A549 (cell line): ENCODE measurements at regions of chr11 and their contacts with region 1.

Region 1: DNA sequence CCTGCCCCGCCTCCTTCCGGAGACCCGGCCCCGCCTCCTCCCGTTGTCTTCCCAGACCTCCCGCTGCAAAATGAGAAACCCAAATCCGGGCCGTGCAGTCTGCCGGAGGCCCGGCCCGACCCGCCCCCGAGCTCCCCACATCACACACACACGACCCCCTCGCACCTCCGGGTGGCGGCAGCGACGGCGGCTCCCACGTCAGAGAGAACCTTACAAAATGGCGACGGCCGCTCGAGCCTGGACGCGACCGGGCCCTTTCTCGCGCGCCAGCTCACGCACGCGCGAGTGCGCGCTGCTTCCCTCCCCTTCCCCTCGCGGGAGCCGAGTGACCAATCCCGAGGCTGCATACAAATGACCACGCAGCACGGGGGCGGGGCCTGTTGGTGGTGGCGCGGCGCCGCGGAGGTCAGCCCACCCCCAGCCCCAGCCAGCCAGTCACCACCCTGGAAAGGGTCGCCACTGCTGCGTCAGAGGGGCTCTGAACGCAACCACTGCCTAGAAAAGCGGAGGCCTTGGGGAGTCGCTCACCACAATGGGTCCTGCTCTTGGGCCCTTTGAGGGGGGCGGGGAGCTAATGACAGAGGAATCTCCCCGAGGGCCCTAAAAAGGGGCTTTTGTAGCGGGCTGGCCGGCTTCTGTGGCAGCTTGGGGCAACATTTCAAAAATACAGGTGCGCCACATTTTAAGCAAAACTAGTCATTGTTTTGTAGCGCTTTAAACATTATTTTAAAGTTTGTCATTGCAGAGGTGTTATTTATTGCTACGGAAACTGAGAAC is at the start of gene RBM4B:
- DNase-seq: peak; percentile 96 to 97
- ATAC-seq: peak; percentile 96
- H3K4me3 ChIP-seq: peak within 1 kb of the TSS; percentile 72
- H3K27ac ChIP-seq: peak within 1 kb of the TSS; percentile 94 to 98
- H3K4me1 ChIP-seq: peaks cover 26% of the 10 kb centered on the region
- CTCF ChIP-seq: no peak
- EP300 ChIP-seq: no peak
- POLR2A ChIP-seq: peak; percentile 66
- RAD21 ChIP-seq: no peak
- polyA plus RNA-seq, gene RBM4B: 30.1 and 32.7 TPM in 2 replicates

Region 2: GRCh38 chr11:66408488-66409214 is 269.1 kb before region 1 on chr11:
- CTCF ChIA-PET with region 1: interaction called, 46 read pairs
- POLR2A ChIA-PET with region 1: no interaction called
- DNase-seq: peak; percentile 87 to 91
- ATAC-seq: peak; percentile 72 to 88
- H3K4me3 ChIP-seq: peak overlapping the region; percentile 47
- H3K27ac ChIP-seq: peak overlapping the region in 1 of 2 experiments; percentile 38; a peak in 1 of 6 replicates
- H3K4me1 ChIP-seq: no peaks in the 10 kb centered on the region
- CTCF ChIP-seq: peak; percentile 100
- EP300 ChIP-seq: no peak
- POLR2A ChIP-seq: no peak
- RAD21 ChIP-seq: peak; percentile 95 to 99

Region 3: DNA sequence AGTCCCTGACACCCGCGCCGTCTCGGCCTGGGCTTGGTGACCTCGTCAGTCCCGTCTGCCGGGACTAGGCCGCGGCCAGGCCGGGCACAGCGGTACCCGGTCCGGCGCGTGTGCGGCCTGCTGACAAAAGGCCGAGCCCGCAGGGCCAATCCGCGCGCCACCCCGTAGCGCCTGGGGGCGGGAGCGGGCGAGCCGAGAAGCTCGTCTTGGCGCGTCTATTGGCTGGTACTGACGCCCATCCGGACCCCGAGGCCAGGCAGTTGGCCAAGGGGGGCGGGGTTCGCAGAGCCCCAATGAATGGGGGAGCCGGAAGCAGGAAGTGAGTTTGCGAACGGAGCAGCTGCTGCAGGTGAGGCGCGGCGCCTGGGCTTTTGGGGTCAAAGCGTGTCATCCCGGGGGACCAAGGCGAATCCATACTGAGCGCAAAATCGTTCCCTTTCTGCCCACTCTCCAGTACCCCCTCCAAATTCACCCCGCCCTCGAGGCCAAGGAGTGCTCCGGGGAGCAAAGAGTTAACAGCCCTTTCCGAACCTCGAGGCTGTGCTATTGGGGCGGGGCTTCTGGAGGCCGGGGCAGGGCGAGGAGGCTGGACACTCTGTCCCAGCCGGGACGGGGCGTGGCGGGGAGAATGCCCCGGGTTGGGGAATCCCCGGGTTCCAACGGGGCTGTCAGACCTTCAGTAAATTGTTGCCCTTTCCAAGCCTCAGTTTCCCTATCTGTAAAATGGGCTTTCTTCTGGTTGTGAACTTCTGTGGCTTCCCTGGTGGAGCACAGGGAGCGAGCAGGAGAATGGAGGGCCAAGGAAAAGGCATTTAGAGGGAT is 197.5 kb before region 1 on chr11 and contains the start of gene DPP3:
- CTCF ChIA-PET with region 1: interaction called, 6 read pairs
- POLR2A ChIA-PET with region 1: interaction called, 17 read pairs
- DNase-seq: peak; percentile 97 to 100
- ATAC-seq: peak; percentile 92 to 95
- H3K4me3 ChIP-seq: peak within 1 kb of the TSS; percentile 73
- H3K27ac ChIP-seq: peak within 1 kb of the TSS; percentile 94 to 98
- H3K4me1 ChIP-seq: peaks cover 6% of the 10 kb centered on the region; the same call in 1 of the 3 replicates
- CTCF ChIP-seq: no peak
- EP300 ChIP-seq: no peak
- POLR2A ChIP-seq: peak; percentile 80
- RAD21 ChIP-seq: no peak
- polyA plus RNA-seq, gene DPP3: 52.2 TPM in 2 replicates

Region 4: GRCh38 chr11:66592457-66593302 is 85.1 kb before region 1 on chr11 and contains the starts of genes CCDC87 and CCS:
- CTCF ChIA-PET with region 1: interaction called, 21 read pairs
- POLR2A ChIA-PET with region 1: interaction called, 4 read pairs
- DNase-seq: peak; percentile 96 to 100
- ATAC-seq: peak; percentile 98
- H3K4me3 ChIP-seq: peak within 1 kb of the TSS; percentile 68
- H3K27ac ChIP-seq: peak within 1 kb of the TSS; percentile 89 to 91
- H3K4me1 ChIP-seq: peaks cover 9% of the 10 kb centered on the region; the same call in 2 of the 3 replicates
- CTCF ChIP-seq: peak; percentile 68
- EP300 ChIP-seq: no peak
- POLR2A ChIP-seq: peak; percentile 99
- RAD21 ChIP-seq: peak in 1 of 2 experiments; percentile 45; a peak in 3 of 5 replicates
- polyA plus RNA-seq, gene CCDC87: 0.47 and 0.54 TPM in 2 replicates
- polyA plus RNA-seq, gene CCS: 17.2 and 18.3 TPM in 2 replicates

Region 5: DNA sequence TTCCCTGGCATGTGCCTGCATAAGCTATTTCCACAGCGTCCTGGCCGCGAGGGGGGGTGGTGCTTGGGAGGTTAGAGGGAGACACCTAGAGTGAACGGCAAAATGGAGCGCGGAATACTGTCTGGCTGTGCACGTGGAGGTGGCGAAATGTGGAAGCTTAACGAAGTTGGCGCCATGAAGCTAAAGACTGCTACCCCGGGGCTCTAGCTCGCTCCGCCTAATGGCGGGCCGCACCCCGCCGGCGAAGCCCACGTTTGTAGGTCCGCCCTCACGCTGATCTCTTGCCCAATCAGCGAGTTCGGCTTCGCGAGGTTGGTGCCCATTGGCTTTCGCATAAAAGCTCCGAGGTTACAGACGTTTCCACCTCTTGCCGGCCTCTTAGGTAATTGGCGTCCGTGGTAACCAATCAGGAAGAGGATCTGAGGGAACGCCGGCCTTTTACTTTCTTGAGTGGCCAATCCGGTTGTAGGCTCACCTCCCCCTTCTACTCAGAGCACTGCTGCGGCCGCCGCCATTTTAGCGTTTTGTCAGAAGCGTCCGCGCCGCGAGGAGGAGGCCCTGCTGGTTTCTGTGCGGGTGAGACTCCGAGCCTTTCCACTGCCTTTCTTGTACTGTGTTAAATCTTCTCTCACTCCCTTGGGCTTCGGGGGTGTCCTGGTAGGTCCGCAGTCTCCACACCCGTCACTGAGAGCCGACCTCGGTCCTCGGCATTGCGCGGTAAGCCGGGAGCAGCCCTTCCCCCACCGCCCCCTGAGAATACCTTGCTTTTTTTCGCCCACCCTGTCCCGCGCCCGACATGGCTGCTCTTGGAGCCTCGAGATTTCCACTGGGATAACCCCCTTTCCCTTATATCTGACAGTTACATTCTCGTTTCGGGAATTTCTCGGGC is 39.4 kb before region 1 on chr11 and contains the start of gene RBM4:
- CTCF ChIA-PET with region 1: interaction called, 6 read pairs
- POLR2A ChIA-PET with region 1: interaction called, 23 read pairs
- DNase-seq: peak; percentile 99 to 100
- ATAC-seq: peak; percentile 95
- H3K4me3 ChIP-seq: peak within 1 kb of the TSS; percentile 71
- H3K27ac ChIP-seq: peak within 1 kb of the TSS; percentile 88 to 91
- H3K4me1 ChIP-seq: peaks cover 44% of the 10 kb centered on the region
- CTCF ChIP-seq: 0 out of 3 replicates have a peak, but pooled peaks have one; percentile 6
- EP300 ChIP-seq: no peak
- POLR2A ChIP-seq: peak; percentile 73
- RAD21 ChIP-seq: no peak
- polyA plus RNA-seq, gene RBM4: 190 and 264 TPM in 2 replicates

Region 6: DNA sequence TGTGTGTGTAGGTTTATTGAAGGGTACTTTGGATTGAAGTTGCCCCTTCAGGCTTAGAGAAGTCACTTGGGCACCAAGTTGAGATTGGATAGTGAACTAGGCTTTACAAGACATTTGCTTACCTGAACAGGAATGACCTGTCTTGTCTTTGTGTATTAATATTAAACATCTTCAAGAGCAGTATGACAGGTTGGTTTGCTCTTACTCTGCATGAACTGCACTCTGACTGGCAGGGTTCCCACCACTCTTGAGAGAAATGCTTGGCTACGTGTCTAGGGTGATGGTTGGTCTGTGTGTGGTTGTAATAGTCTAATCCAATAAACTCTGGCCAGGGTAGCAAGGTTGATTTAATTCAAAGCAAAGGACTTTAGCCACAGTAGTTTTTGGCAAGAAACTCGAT is 71.3 kb after region 1 on chr11:
- CTCF ChIA-PET with region 1: no interaction called
- POLR2A ChIA-PET with region 1: no interaction called
- DNase-seq: no peak
- ATAC-seq: no peak
- H3K4me3 ChIP-seq: no peak overlapping the region
- H3K27ac ChIP-seq: no peak overlapping the region
- H3K4me1 ChIP-seq: peaks cover 19% of the 10 kb centered on the region
- CTCF ChIP-seq: no peak
- EP300 ChIP-seq: no peak
- POLR2A ChIP-seq: no peak
- RAD21 ChIP-seq: no peak

Region 7: DNA sequence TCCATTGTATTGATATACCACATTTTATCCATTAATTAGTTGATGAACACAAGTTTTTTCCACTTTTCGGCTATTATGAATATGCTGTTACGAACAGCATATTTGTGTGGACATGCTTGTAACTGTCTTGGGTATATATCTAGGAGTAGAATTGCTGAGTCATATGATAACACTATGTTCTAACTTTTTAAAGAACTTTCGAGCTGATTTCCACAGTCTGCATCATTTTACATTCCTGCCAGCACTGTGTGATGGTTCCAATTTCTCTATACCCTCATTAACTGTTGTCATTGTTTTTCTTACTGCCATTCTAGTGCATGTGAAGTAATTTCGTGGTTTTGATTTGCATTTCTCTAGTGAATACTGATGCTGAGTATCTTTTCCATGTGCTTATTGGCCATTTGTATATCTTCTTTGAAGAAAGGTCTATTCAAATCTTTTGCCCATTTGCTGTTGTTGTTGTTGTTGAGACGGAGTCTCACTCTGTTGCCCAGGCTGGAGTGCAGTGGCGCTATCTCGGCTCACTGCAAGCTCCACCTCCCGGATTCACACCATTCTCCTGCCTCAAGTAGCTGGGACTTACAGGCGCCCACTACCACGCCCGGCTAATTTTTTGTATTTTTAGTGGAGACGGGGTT is 158.1 kb after region 1 on chr11:
- CTCF ChIA-PET with region 1: interaction called, 26 read pairs
- POLR2A ChIA-PET with region 1: no interaction called
- DNase-seq: no peak
- ATAC-seq: no peak
- H3K4me3 ChIP-seq: no peak overlapping the region
- H3K27ac ChIP-seq: peak overlapping the region; percentile 54 to 62; a peak in 5 of 6 replicates
- H3K4me1 ChIP-seq: peaks cover 20% of the 10 kb centered on the region
- CTCF ChIP-seq: no peak
- EP300 ChIP-seq: no peak
- POLR2A ChIP-seq: no peak
- RAD21 ChIP-seq: no peak